AG04450 (cell line): ENCODE measurements at regions of chr7 and their contacts with region 1.

Region 1: DNA sequence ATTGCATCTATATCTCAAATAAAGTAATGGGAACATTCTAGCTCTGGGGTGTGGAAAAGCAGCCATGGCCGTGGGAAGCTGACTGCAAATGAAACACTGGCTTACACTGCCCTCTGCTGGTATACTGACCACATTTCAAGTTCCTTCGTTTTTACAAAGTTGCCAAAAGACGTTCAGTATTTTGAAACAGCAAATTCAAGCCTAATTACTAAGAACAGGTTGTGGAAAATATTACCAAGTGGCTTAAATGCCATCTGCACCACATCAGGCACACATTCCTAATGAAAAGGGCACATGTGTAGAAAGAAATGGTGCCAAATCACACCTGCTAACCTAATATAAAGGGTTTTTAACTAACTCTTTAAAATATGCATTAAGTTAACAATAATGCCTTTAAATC is 83.9 kb downstream of the JAZF1 start:
- DNase-seq: peak; percentile 57
- H3K4me3 ChIP-seq: no peak overlapping the region
- H3K27ac ChIP-seq: no peak overlapping the region
- H3K27me3 ChIP-seq: no peaks in the 10 kb centered on the region
- CTCF ChIP-seq: peak; percentile 79

Region 2: GRCh38 chr7:27593226-27593625 is 503.5 kb before region 1 on chr7:
- CTCF ChIA-PET with region 1: no interaction called
- POLR2A ChIA-PET with region 1: no interaction called
- DNase-seq: no peak
- H3K4me3 ChIP-seq: no peak overlapping the region
- H3K27ac ChIP-seq: no peak overlapping the region
- H3K27me3 ChIP-seq: no peaks in the 10 kb centered on the region
- CTCF ChIP-seq: no peak

Region 3: GRCh38 chr7:28020302-28020940 is 76.3 kb before region 1 on chr7:
- CTCF ChIA-PET with region 1: interaction called, 35 read pairs
- POLR2A ChIA-PET with region 1: no interaction called
- DNase-seq: peak; percentile 46
- H3K4me3 ChIP-seq: no peak overlapping the region
- H3K27ac ChIP-seq: no peak overlapping the region
- H3K27me3 ChIP-seq: no peaks in the 10 kb centered on the region
- CTCF ChIP-seq: peak; percentile 87

Region 4: GRCh38 chr7:28037220-28038010 is 59.3 kb before region 1 on chr7:
- CTCF ChIA-PET with region 1: interaction called, 11 read pairs
- POLR2A ChIA-PET with region 1: no interaction called
- DNase-seq: peak; percentile 83
- H3K4me3 ChIP-seq: no peak overlapping the region
- H3K27ac ChIP-seq: peak overlapping the region; percentile 71
- H3K27me3 ChIP-seq: no peaks in the 10 kb centered on the region
- CTCF ChIP-seq: no peak

Region 5: DNA sequence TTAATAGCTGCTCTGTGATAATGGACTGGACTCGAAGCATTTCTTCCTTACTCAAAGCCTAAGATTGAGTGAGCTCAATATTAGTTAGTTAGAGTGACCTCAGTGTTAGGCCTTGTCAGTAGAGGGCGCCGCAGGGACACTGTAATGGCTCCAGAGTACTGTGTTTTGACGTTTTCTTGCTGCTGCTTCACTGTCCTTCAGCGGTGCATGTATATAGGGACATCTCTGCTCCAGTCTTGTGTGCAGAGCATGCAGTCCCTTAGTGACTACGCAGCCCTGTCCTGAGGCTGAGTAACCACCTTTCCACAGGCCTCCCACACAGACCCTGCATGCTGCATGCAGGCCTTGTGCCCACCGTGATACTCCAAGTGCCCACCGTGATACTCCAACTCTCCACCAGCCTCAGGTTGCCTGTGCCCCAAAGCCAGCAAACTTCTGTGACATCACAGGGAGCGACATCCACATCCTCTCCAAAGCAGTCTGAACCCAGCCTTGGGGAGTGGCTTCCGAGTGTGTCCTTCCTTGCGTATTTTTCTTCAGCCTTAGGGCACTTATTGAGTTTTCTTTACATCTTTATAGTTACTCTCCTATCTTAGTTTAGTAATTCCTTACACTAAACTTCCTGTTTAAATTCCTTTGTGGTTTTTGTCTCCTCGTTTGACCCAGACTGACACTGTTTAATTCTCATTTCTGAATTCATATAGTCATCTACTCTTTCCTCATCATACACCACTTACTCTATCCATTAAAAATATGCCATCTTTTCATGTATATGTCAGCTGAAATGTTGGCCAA is 34.3 kb before region 1 on chr7:
- CTCF ChIA-PET with region 1: interaction called, 29 read pairs
- POLR2A ChIA-PET with region 1: interaction called, 3 read pairs
- DNase-seq: no peak
- H3K4me3 ChIP-seq: no peak overlapping the region
- H3K27ac ChIP-seq: peak overlapping the region; percentile 69
- H3K27me3 ChIP-seq: no peaks in the 10 kb centered on the region
- CTCF ChIP-seq: peak; percentile 63

Region 6: GRCh38 chr7:28078036-28078901 is 18.4 kb before region 1 on chr7:
- CTCF ChIA-PET with region 1: interaction called, 34 read pairs
- POLR2A ChIA-PET with region 1: no interaction called
- DNase-seq: no peak
- H3K4me3 ChIP-seq: no peak overlapping the region
- H3K27ac ChIP-seq: no peak overlapping the region
- H3K27me3 ChIP-seq: no peaks in the 10 kb centered on the region
- CTCF ChIP-seq: peak; percentile 99

Region 7: GRCh38 chr7:28083164-28083997 is 13.3 kb before region 1 on chr7:
- CTCF ChIA-PET with region 1: interaction called, 34 read pairs
- POLR2A ChIA-PET with region 1: no interaction called
- DNase-seq: no peak
- H3K4me3 ChIP-seq: no peak overlapping the region
- H3K27ac ChIP-seq: no peak overlapping the region
- H3K27me3 ChIP-seq: no peaks in the 10 kb centered on the region
- CTCF ChIP-seq: no peak

Region 8: GRCh38 chr7:28165961-28166955 is 69.5 kb after region 1 on chr7:
- CTCF ChIA-PET with region 1: interaction called, 14 read pairs
- POLR2A ChIA-PET with region 1: no interaction called
- DNase-seq: no peak
- H3K4me3 ChIP-seq: no peak overlapping the region
- H3K27ac ChIP-seq: peak overlapping the region; percentile 89
- H3K27me3 ChIP-seq: no peaks in the 10 kb centered on the region
- CTCF ChIP-seq: no peak

Region 9: GRCh38 chr7:28354601-28355402 is 258.1 kb after region 1 on chr7:
- CTCF ChIA-PET with region 1: no interaction called
- POLR2A ChIA-PET with region 1: no interaction called
- DNase-seq: peak; percentile 88
- H3K4me3 ChIP-seq: no peak overlapping the region
- H3K27ac ChIP-seq: peak overlapping the region; percentile 79
- H3K27me3 ChIP-seq: no peaks in the 10 kb centered on the region
- CTCF ChIP-seq: no peak